Head of caudate nucleus (tissue), 42 donors: ENCODE measurements at regions of chr6 and their contacts with region 1.

Region 1: GRCh38 chr6:32127717-32128592 is at the start of gene ATF6B:
- DNase-seq: peak; percentile 96 to 100 (median 99)

Region 2: DNA sequence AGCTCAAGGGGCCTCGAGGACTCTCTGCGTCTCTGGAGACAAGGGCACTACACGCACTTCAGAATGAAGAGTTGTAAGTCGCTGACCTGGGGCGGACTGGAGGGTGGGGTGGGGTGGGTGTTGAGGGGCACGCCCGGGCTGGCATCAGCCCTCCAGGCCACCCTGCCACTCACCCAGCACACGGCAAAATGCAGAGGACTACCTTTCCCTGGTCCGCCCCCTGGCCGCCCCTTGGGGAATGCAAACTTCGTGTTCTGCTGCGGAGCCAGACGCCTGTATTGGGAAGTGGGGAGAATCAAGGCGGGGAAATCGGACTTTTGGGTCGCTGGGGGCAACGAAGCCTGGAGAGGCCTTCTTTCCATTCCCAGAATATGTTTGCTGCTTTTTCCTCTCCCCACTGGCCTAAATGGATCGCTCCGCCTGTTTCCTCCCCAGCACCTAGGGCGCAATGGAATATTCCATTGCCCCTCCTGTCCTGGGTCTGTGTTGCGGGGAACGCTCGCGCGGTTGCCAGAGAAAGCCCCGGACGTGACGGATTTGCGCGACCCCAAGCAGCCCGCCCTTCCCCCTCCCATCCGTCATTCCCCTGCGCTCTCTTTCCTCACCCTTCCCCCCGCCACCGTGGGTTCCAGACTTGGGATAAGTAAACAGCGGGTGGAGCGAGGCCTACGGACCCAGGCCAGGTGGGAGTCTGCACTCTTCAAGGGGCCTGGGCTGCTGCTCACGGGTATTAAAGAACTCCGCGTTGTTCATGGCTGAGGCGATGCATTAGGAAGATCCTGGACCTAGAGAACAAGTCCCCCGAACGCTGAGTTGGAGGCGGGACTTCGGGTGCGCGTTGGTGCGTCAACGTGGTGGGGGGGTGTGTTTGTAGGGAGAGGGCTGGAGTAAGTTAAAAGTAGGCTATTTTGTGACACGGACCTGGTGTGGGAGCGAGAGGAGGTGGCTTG is 25.9 kb after region 1 on chr6 and contains the start of gene PPT2:
- intact Hi-C with region 1: loop called (anchors 2 kb)
- DNase-seq: peak; percentile 76 to 96 (median 92)

Region 3: GRCh38 chr6:32195652-32195901 is 67.6 kb after region 1 on chr6:
- intact Hi-C with region 1: loop called (anchors 5 kb)
- DNase-seq: peak; percentile 100

Region 4: DNA sequence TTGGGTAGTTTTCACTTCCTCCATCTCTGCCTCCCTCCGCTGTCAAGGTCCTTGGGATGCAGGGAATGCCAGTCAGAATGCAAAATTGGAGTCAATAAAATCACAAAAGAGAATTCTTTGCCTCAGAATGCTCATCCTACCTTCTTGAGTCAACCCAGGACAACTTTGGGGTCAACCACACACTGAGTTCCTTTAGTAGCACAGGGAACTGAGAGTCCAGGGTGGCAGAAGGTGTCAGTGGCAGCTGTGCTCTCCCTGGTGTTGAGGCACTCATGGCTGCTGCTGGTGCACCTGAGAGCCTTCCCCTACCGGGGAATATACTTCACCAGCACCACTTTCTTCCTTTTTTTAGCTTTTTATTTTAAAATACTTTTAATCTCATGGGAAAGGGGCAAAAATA is 96.7 kb after region 1 on chr6:
- intact Hi-C with region 1: no loop called
- DNase-seq: no peak